ENCODE measurements at regions of chr2 and their contacts with region 1.

Region 1: GRCh38 chr2:3423492-3424175 is 44.1 kb downstream of the TRAPPC12 start:
- DNase-seq: peak; percentile 72 to 81
- ATAC-seq: peak; percentile 62 to 84 (median 76)
- H3K4me3 ChIP-seq: no peak overlapping the region
- H3K27ac ChIP-seq: no peak overlapping the region
- H3K4me1 ChIP-seq: no peaks in the 10 kb centered on the region
- H3K27me3 ChIP-seq: no peaks in the 10 kb centered on the region
- CTCF ChIP-seq: peak; percentile 99

Region 2: DNA sequence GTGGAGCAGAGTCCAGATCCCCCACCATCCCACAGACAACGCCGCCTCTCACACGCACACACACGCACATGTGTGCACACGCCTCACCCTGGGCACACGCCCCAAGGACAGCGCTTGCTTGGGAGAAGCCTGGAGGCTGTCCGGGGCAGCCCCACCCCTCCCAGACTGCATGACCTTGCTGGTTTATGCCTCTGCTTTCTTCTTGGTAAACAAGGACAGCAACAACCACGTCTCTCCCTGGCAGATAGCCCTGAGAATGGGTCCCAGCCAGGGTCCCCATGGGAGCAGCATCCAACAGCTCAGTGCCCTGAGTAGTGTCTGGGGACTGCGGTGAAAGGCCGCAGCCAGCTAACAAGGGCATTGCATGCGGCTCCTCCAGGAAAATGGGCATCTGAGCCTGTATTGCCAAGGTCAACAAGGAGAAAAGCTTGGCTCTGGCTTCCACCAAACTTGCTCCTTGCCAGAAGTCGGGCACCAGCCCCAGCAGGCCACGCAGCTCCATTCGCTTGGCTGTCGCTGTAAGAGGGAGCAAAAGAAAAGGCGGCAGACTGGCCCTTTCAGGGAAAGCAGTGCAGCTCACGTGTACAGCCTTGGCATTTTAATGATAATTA is 280.6 kb before region 1 on chr2:
- intact Hi-C with region 1: no loop called
- DNase-seq: no peak
- ATAC-seq: no peak
- H3K4me3 ChIP-seq: no peak overlapping the region
- H3K27ac ChIP-seq: no peak overlapping the region
- H3K4me1 ChIP-seq: no peaks in the 10 kb centered on the region
- H3K27me3 ChIP-seq: no peaks in the 10 kb centered on the region
- CTCF ChIP-seq: no peak

Region 3: DNA sequence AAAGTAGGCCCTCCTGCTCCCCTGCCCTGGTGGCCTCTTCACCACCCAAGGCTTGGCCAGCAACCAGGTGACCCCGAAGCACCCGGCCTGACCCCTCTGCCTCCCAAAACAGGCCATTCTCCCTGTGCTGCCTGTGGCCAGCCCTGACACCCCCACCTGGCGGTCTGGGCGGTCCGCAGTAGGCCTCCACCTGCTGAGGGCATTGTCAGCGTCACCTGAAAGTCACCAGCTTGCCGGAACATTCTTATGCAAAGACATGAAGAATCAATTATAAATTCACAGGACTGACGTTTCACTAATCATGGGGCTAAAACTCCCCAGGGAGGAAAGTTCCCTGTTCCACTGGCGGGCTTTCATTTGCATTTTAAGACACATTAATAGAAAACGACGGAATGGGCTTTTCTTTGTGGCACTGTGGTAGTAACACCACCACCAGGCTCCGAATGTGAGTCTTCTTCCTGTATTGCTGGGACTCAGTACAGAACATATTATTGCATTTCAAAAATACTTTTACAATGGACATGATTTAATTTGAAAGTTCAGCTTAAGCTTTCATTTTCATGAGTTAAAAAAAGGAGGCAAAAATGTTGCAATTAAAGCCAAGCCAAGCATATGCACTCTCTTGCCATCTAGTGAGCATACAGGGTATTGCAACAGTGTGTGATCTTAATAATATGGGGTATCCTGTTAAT is 38.3 kb after region 1 on chr2:
- intact Hi-C with region 1: loop called in 1 of 2 experiments (anchors 2 kb)
- DNase-seq: no peak
- ATAC-seq: no peak
- H3K4me3 ChIP-seq: no peak overlapping the region
- H3K27ac ChIP-seq: no peak overlapping the region
- H3K4me1 ChIP-seq: peaks cover 42% of the 10 kb centered on the region
- H3K27me3 ChIP-seq: no peaks in the 10 kb centered on the region
- CTCF ChIP-seq: peak; percentile 94